ENCODE measurements at regions of chr10 and their contacts with region 1.

Region 1: GRCh38 chr10:68826764-68827591 is at the start of gene STOX1:
- DNase-seq: peak; percentile 69
- H3K4me3 ChIP-seq: peak within 1 kb of the TSS; percentile 50 to 54 (median 52)
- H3K27ac ChIP-seq: no peak within 1 kb of the TSS
- H3K4me1 ChIP-seq: peaks cover 6% of the 10 kb centered on the region
- H3K27me3 ChIP-seq: no peaks in the 10 kb centered on the region
- CTCF ChIP-seq: peak in 1 of 2 donors; percentile 3
- total RNA-seq, gene STOX1: 0.07 to 0.17 TPM

Region 2: DNA sequence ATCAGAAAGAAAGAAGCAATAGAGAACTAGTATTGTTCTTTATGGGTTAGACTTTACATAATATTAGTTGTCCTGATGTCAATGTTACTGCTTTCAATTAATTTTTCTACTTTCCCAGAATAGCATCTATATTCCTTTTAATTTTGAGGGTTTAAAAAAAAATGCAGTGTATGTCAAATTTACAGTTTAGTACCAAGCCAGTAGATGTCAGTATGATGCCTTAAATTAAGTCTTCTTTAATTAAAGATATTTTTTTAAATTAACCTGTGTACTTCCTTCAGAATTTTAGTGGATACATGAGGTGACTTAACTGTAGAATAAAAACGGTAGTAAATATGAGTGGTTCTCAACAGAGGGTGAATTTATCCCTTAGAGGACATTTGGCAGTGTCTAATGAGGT is 34.9 kb before region 1 on chr10:
- CTCF ChIA-PET with region 1: interaction called, 3 read pairs
- dilution Hi-C with region 1: no loop called
- in situ Hi-C with region 1: no loop called
- intact Hi-C with region 1: loop called (anchors 2 kb)
- DNase-seq: no peak
- H3K4me3 ChIP-seq: no peak overlapping the region
- H3K27ac ChIP-seq: no peak overlapping the region
- H3K4me1 ChIP-seq: peaks cover 11% of the 10 kb centered on the region
- H3K27me3 ChIP-seq: no peaks in the 10 kb centered on the region
- CTCF ChIP-seq: peak; percentile 10 to 15

Region 3: GRCh38 chr10:69337296-69338132 is 510.5 kb after region 1 on chr10:
- CTCF ChIA-PET with region 1: no interaction called
- dilution Hi-C with region 1: no loop called
- in situ Hi-C with region 1: no loop called
- intact Hi-C with region 1: no loop called
- DNase-seq: peak; percentile 95
- H3K4me3 ChIP-seq: peak overlapping the region in 1 of 3 experiments; percentile 17
- H3K27ac ChIP-seq: peak overlapping the region; percentile 72
- H3K4me1 ChIP-seq: peaks cover 81% of the 10 kb centered on the region
- H3K27me3 ChIP-seq: no peaks in the 10 kb centered on the region
- CTCF ChIP-seq: no peak

Measured in mammary epithelial cell (primary cell).